ENCODE measurements at regions of chr2 and their contacts with region 1.

Region 1: DNA sequence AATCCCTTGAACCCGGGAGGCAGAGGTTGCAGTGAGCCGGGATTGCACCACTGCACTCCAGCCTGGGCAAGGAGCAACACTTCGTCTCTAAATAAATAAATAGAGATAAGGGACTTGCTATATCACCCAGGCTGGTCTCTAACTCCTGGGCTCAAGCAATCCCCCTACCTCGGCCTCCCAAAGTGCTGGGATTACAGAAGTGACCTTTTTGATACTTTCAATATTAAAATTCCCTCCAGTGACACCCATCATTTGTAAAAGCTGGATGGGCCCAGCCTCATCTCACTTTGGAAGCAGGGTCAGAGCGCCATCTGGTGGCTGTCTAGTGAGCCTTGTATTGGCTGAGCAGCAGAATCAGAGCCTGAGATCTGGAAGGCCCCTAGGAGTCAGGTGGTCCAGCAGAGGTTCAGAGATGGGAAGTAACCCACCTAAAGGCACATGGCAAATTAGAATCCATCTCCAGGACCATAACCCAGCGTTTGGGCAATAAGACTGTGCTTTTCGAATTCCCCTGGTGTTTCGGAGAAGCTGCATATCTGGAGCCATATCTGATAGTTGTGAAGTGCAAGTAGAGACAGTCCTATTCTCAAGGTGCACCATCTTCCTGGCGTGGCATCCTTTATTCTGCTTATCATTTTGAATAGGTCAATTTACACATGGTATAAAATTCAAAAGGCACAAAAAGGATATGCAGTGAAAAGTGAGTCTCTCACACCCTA is 18.3 kb upstream of the SLC35F6 start:
- DNase-seq: peak; percentile 88
- ATAC-seq: peak; percentile 87
- H3K4me3 Mint-ChIP-seq: no peak overlapping the region
- H3K27ac Mint-ChIP-seq: no peak overlapping the region
- H3K4me1 Mint-ChIP-seq: peaks cover 17% of the 10 kb centered on the region
- H3K27me3 Mint-ChIP-seq: peaks cover 49% of the 10 kb centered on the region
- CTCF ChIP-seq: peak; percentile 92

Region 2: GRCh38 chr2:26605195-26605998 is 140.4 kb before region 1 on chr2:
- CTCF ChIA-PET with region 1: interaction called, 83 read pairs
- POLR2A ChIA-PET with region 1: no interaction called
- DNase-seq: peak; percentile 67
- ATAC-seq: peak; percentile 89
- H3K4me3 Mint-ChIP-seq: no peak overlapping the region
- H3K27ac Mint-ChIP-seq: no peak overlapping the region
- H3K4me1 Mint-ChIP-seq: peaks cover 15% of the 10 kb centered on the region
- H3K27me3 Mint-ChIP-seq: peaks cover 2% of the 10 kb centered on the region; the same call in 1 of the 2 replicates
- CTCF ChIP-seq: peak; percentile 81

Region 3: GRCh38 chr2:26612522-26613240 is 133.1 kb before region 1 on chr2:
- CTCF ChIA-PET with region 1: interaction called, 83 read pairs
- POLR2A ChIA-PET with region 1: no interaction called
- DNase-seq: no peak
- ATAC-seq: no peak
- H3K4me3 Mint-ChIP-seq: no peak overlapping the region
- H3K27ac Mint-ChIP-seq: no peak overlapping the region
- H3K4me1 Mint-ChIP-seq: peaks cover 27% of the 10 kb centered on the region
- H3K27me3 Mint-ChIP-seq: peaks cover 2% of the 10 kb centered on the region; the same call in 1 of the 2 replicates
- CTCF ChIP-seq: no peak

Region 4: GRCh38 chr2:26623541-26624396 is 122.0 kb before region 1 on chr2:
- CTCF ChIA-PET with region 1: no interaction called
- POLR2A ChIA-PET with region 1: no interaction called
- DNase-seq: no peak
- ATAC-seq: peak; percentile 32; the same call in 1 of the 2 replicates
- H3K4me3 Mint-ChIP-seq: no peak overlapping the region
- H3K27ac Mint-ChIP-seq: peak overlapping the region; percentile 45; the same call in 1 of the 2 replicates
- H3K4me1 Mint-ChIP-seq: peaks cover 19% of the 10 kb centered on the region
- H3K27me3 Mint-ChIP-seq: peaks cover 30% of the 10 kb centered on the region
- CTCF ChIP-seq: no peak

Region 5: DNA sequence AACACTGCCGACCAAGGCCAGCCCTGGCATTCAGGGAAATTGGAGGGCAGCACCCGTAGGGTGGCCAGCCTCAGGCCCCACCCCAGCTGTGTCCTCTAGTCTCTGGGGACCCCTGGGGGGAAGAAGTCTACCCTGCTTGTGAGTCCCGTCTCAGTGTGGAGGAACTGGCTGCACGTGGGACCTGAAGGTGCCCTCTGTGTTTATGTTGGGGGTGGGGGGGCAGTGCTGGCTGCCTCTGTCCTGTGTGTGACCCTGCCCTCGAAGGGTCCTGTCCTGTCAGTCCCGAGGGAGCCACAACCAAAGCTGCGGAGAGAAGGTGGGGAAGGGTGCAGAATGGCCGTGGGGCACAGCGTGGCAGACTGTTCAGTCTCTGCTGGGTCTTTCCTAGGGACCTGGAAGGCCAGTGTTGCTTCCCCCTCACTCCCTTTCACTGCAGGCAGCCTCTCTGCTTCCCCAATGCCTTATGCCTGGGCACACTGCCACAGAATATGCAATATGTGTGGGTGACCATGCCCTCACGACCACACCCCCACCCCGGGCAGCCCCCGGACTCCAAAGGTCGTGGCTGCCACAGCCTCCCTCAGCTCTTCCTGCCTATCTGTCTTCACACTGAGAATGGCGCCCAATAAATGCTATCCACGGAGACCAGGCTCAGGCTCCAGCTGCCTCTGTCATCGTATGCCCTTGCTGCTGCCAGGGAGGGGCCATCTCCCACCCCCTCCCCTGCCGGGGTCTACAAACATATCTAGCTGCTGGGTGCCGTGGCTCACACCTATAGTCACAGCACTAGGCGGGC is 15.0 kb before region 1 on chr2:
- CTCF ChIA-PET with region 1: interaction called, 12 read pairs
- POLR2A ChIA-PET with region 1: no interaction called
- DNase-seq: no peak
- ATAC-seq: no peak
- H3K4me3 Mint-ChIP-seq: no peak overlapping the region
- H3K27ac Mint-ChIP-seq: no peak overlapping the region
- H3K4me1 Mint-ChIP-seq: no peaks in the 10 kb centered on the region
- H3K27me3 Mint-ChIP-seq: no peaks in the 10 kb centered on the region
- CTCF ChIP-seq: no peak